Activated CD8-positive, alpha-beta memory T cell treated with anti-CD3 and anti-CD28 coated beads, Interleukin-2, amount 10 ng/mL, durations not matched to agents 7 days and 5 days (primary cell): ENCODE measurements at regions of chr19 and their contacts with region 1.

Region 1: GRCh38 chr19:2648528-2648937 is 54.0 kb downstream of the GNG7 start:
- DNase-seq: peak; percentile 79
- ATAC-seq: peak; percentile 87
- H3K4me3 Mint-ChIP-seq: no peak overlapping the region
- H3K27ac Mint-ChIP-seq: no peak overlapping the region
- H3K4me1 Mint-ChIP-seq: no peaks in the 10 kb centered on the region
- H3K27me3 Mint-ChIP-seq: no peaks in the 10 kb centered on the region

Region 2: DNA sequence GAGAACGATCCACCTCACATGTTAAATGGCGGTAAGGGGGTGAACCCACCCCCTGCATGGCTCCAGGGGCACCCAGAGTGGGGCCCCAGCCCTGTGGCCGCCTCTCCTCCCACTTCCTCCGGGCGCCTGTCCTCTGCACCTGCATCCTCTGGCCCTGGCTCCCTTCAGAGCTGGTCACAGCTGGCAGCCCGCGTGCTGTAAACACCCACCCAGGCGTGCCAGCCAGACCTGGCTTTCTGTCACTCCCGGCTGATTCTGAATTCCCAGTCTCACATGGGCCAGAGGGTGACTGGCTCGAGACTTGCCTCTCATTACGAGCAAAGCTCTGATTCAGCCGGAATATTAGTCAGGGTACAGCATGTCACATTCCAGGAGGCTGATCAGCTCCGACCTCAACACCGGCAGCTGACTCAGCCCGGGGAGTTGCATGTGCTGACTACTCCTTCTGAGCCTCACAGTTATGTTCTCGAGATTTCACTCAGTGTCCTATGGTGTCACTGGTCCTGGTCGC is 21.2 kb before region 1 on chr19:
- CTCF ChIA-PET with region 1: interaction called, 13 read pairs
- DNase-seq: no peak
- ATAC-seq: peak; percentile 34
- H3K4me3 Mint-ChIP-seq: no peak overlapping the region
- H3K27ac Mint-ChIP-seq: peak overlapping the region; percentile 59
- H3K4me1 Mint-ChIP-seq: peaks cover 30% of the 10 kb centered on the region
- H3K27me3 Mint-ChIP-seq: no peaks in the 10 kb centered on the region

Region 3: DNA sequence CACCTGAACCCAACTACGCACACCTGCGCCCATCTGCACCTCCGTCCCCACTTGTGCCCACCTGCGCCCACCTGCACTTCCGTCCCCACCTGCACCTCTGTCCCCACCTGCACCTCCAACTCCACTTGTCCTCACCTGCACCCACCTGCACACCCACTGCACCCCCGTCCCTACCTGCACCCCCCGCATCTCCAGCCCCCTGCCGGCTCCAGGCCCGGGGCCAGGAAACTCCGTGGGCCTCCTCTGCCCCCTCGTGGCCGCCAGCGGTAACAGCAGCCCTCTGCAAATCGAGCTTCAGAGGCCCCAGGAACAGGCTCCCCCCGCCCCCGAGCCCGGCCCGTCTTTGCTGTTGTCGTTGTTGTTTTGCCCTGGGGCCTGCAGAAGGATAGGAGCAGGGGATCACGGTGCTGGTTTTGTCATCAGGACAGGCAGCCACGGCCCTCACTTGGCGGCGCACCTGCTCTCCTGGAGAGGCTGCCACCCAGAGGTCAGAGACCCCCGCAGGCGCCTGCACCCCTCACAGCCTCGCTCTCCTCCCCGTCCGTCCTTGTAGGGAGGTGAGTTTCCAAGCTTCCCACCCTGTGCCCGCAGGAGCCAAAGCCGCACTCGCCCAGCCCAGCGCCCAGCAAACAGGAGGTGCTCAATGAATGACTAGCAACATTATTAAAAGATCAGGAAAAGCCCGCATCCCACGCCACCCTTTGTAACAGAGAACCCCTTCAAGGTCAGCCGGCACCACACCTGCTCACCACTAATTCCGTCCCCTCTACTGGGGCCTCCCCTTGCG is 11.4 kb before region 1 on chr19:
- CTCF ChIA-PET with region 1: interaction called, 23 read pairs
- DNase-seq: peak; percentile 80
- ATAC-seq: peak; percentile 84
- H3K4me3 Mint-ChIP-seq: no peak overlapping the region
- H3K27ac Mint-ChIP-seq: no peak overlapping the region
- H3K4me1 Mint-ChIP-seq: no peaks in the 10 kb centered on the region
- H3K27me3 Mint-ChIP-seq: peaks cover 8% of the 10 kb centered on the region

Region 4: DNA sequence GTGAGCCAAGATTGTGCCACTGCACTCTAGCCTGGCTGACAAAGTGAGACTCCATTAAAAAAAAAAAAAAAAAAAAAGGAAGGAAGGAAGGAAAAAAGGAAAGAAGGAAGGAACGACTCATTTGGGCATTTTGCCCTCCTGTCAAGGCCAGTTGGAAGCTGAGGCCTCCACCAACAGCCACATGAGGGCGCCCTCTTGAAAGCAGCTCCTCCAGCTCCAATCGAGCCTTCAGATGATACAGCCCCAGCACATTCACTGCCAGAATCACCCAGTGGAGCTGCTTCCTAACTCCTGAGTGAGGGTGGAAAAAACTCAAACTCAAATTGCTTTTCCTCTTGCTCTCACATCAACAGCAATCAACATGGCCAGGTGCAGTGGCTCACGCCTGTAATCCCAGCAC is 13.1 kb after region 1 on chr19:
- CTCF ChIA-PET with region 1: interaction called, 19 read pairs
- DNase-seq: no peak
- ATAC-seq: no peak
- H3K4me3 Mint-ChIP-seq: no peak overlapping the region
- H3K27ac Mint-ChIP-seq: no peak overlapping the region
- H3K4me1 Mint-ChIP-seq: no peaks in the 10 kb centered on the region
- H3K27me3 Mint-ChIP-seq: no peaks in the 10 kb centered on the region

Region 5: DNA sequence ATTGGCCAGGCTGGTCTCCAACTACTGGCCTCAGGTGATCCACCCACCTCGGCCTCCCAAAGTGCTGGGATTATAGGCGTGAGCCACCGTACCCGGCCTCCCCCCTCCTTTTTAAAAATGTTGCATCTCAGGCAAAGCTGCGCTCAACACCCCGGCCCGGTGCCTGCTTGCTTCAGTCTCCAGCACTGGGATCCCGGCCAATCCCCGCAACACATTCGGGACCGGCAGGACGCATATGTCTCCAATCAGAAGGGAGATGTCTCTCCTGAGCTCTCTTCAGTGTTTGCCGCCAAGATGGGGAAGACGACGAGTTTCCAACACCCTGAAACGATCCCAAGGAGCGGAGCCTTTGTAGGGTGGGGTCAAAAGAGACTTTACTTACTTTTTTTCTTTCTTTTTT is 37.8 kb after region 1 on chr19:
- CTCF ChIA-PET with region 1: no interaction called
- DNase-seq: no peak
- ATAC-seq: no peak
- H3K4me3 Mint-ChIP-seq: no peak overlapping the region
- H3K27ac Mint-ChIP-seq: no peak overlapping the region
- H3K4me1 Mint-ChIP-seq: no peaks in the 10 kb centered on the region
- H3K27me3 Mint-ChIP-seq: no peaks in the 10 kb centered on the region

Region 6: DNA sequence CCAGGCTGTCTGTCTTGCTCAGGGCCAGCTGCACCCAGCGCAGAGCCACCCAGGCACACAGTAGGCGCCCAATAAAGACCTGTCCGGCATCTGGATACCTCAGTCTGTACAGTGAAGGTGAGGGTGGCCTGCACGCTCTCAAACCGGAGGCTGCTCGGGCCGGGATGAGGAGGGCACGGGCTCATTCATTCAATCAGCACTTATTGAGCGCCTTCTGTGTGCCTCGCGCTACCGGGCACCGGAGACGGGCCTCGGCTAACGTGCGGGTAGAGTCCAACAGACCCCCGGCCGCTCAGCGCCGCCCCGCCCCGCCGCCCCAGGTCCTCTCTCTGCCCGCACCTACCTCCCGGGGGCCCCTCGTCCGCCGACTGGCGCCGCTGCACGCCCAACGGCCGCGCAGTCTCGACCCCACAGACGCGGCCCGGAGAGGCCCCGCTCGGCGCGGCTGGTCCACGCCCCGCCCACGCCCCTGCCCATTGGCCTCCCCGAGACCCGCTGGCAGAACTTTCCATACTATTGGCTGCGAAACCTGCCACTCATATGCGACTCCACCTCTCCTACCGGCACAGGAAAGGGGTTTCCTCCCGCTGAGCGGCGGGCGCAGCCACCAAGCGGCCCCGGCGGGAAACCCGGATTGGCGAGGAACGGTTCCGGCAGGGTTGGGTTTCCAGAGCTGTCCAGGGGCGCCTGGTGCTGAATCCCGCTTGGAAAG is 91.2 kb after region 1 on chr19 and contains the start of gene SLC39A3:
- CTCF ChIA-PET with region 1: interaction called, 12 read pairs
- DNase-seq: peak; percentile 99
- ATAC-seq: peak; percentile 99
- H3K4me3 Mint-ChIP-seq: peak within 1 kb of the TSS; percentile 87
- H3K27ac Mint-ChIP-seq: peak within 1 kb of the TSS; percentile 76
- H3K4me1 Mint-ChIP-seq: peaks cover 14% of the 10 kb centered on the region
- H3K27me3 Mint-ChIP-seq: peaks cover 12% of the 10 kb centered on the region
- total RNA-seq, gene SLC39A3: 36.9 to 41.3 TPM

Region 7: GRCh38 chr19:2750808-2751443 is 102.4 kb after region 1 on chr19:
- CTCF ChIA-PET with region 1: interaction called, 88 read pairs
- DNase-seq: no peak
- ATAC-seq: no peak
- H3K4me3 Mint-ChIP-seq: no peak overlapping the region
- H3K27ac Mint-ChIP-seq: no peak overlapping the region
- H3K4me1 Mint-ChIP-seq: no peaks in the 10 kb centered on the region
- H3K27me3 Mint-ChIP-seq: no peaks in the 10 kb centered on the region

Region 8: DNA sequence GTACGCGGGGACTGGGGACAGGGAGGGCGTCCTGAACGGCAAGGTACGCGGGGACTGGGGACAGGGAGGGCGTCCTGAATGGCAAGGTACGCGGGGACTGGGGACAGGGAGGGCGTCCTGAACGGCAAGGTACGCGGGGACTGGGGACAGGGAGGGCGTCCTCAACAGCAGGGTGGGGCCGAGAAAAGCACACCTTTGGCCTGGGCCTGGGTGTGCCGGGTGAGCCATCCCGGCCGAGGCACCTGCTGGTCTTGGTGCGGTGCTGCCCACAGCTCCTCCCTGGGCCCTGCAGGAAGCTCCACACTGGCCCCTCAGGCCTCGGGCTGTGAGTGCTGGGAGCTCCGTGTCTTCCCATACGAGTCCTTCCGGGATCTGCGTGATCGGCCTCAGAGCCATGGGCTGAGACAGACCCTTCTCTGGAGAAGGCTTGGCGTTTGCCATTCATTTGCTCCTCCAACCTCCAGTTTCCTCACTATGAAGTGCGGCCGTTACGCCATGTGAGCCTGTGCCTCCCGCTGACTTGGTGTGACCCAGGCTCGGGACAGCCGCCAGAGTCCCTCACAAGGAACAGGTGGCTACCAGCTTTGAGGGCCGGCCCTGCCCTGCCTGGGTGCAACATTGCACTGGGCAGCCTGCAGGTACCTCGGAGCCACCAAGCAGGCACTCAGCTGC is 163.3 kb after region 1 on chr19:
- CTCF ChIA-PET with region 1: no interaction called
- DNase-seq: no peak
- ATAC-seq: no peak
- H3K4me3 Mint-ChIP-seq: no peak overlapping the region
- H3K27ac Mint-ChIP-seq: no peak overlapping the region
- H3K4me1 Mint-ChIP-seq: no peaks in the 10 kb centered on the region
- H3K27me3 Mint-ChIP-seq: no peaks in the 10 kb centered on the region